Activated CD4-positive, alpha-beta T cell treated with anti-CD3 and anti-CD28 coated beads, Interleukin-2, amount 10 ng/mL, durations not matched to agents 7 days and 5 days (primary cell): ENCODE measurements at regions of chr16 and their contacts with region 1.

Region 1: DNA sequence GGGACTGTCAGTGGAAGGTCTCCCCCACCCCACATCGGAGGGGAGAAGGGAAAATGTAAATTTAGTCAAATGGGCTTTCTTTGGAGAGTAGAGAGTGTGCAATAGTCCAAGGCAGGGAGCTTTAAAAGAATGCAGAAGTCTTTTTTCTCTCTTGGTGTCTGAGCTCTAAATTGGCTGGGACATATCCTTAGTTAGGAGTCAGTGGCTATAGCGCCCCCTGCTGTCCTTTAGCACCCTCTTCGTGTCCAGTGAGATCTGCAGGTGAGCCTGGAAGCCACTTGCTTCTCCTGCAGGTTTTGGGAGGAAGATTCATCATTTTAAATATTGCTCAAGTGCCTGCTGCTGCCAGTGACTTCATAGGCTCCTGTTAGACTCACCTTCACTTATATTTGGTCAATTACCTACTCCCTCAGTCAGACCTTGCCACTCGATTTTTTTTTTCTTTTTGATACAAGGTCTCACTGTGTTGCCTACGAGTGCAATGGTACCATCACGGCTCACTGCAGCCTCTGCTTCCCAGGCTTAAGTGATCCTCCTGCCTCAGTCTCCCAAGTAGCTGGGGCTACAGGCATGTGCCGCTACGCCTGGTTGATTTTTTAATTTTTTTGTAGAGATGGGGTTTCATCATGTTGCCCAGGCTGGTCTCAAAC is 174.8 kb downstream of the PRKCB start:
- DNase-seq: peak; percentile 88
- H3K4me3 Mint-ChIP-seq: no peak overlapping the region
- H3K27ac Mint-ChIP-seq: no peak overlapping the region
- H3K4me1 Mint-ChIP-seq: peaks cover 60% of the 10 kb centered on the region
- H3K27me3 Mint-ChIP-seq: no peaks in the 10 kb centered on the region

Region 2: DNA sequence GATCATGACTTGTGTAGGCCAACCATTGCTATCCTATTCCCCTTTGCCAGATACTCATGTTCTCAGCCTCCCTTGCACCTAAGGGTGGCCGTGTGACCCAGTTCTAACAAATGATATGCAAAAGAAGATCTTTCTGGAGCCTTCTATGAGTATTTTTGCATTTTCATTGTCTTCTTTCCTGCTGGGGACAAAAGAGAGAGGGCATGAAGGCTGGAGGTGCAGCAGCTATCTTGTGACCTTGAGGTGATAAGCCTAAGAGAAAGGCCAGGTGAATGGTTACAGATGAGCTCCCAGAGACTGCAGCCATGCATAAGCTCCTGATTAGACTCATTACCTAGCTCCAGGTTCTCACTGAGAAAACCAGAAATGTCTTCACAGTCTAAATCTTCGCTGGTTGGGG is 213.6 kb before region 1 on chr16:
- CTCF ChIA-PET with region 1: interaction called, 12 read pairs
- POLR2A ChIA-PET with region 1: no interaction called
- DNase-seq: no peak
- H3K4me3 Mint-ChIP-seq: no peak overlapping the region
- H3K27ac Mint-ChIP-seq: no peak overlapping the region
- H3K4me1 Mint-ChIP-seq: no peaks in the 10 kb centered on the region
- H3K27me3 Mint-ChIP-seq: peaks cover 3% of the 10 kb centered on the region

Region 3: DNA sequence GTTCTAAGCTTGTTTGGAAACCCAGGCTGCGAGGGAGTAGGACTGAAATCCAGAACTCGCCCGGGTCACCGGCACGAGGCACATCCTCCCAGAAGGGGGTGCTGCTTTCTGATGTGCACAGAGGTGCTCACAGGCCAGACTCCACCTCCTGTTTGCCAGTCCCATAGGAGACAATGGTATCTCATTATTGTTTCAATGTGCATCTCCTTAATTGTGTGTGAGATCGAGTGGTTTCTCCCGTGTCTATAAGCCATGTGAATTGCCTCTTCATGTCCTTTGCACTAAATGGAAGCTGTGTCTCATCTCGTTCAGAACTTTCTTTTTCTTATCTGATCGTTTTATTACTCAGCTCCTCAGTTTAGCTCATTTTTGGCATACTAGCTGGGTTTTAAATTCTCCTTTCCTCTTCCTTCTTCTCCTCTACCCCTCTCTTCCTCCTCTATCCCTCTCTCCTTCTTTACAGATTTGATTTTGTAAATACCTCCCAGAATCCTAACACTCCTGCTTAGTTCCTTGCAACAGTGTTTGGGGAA is 206.9 kb before region 1 on chr16:
- CTCF ChIA-PET with region 1: interaction called, 12 read pairs
- POLR2A ChIA-PET with region 1: no interaction called
- DNase-seq: peak; percentile 80
- H3K4me3 Mint-ChIP-seq: no peak overlapping the region
- H3K27ac Mint-ChIP-seq: no peak overlapping the region
- H3K4me1 Mint-ChIP-seq: peaks cover 12% of the 10 kb centered on the region
- H3K27me3 Mint-ChIP-seq: peaks cover 7% of the 10 kb centered on the region

Region 4: GRCh38 chr16:23966597-23967394 is 43.8 kb before region 1 on chr16:
- CTCF ChIA-PET with region 1: no interaction called
- POLR2A ChIA-PET with region 1: no interaction called
- DNase-seq: no peak
- H3K4me3 Mint-ChIP-seq: no peak overlapping the region
- H3K27ac Mint-ChIP-seq: no peak overlapping the region
- H3K4me1 Mint-ChIP-seq: peaks cover 27% of the 10 kb centered on the region
- H3K27me3 Mint-ChIP-seq: no peaks in the 10 kb centered on the region

Region 5: DNA sequence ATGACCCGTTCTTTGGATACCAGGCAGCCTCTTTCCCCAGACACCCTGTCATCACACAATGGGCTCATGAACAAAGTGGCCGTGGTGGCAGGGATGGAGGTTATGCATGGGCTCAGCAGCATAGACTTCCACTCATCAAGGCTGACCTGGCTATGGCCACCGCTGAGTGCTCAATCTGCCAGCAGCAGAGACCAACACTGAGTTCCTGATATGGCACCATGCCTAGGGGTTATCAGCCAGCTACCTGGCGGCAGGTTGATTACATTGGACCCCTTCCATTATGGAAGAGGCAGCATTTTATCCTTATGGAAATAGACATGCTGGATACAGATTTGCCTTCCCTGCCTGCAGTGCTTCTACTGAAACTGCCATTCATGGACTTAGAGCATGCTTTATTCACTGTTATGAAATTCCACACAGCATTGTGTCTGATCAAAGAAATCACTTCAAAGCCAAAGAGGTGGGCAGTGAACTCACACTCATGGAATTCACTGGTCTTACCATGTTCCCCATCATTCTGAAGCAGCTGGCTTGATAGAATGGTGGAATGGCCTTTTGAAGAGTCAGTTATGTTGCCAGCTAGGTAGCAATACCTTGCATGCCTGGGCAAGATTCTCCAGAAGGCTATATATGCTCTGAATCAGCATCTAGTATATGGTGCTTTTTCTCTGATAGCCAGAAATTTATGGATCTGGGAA is 14.2 kb before region 1 on chr16:
- CTCF ChIA-PET with region 1: no interaction called
- POLR2A ChIA-PET with region 1: no interaction called
- DNase-seq: no peak
- H3K4me3 Mint-ChIP-seq: no peak overlapping the region
- H3K27ac Mint-ChIP-seq: no peak overlapping the region
- H3K4me1 Mint-ChIP-seq: peaks cover 5% of the 10 kb centered on the region
- H3K27me3 Mint-ChIP-seq: no peaks in the 10 kb centered on the region

Region 6: GRCh38 chr16:24163935-24164334 is 153.4 kb after region 1 on chr16:
- CTCF ChIA-PET with region 1: no interaction called
- POLR2A ChIA-PET with region 1: no interaction called
- DNase-seq: no peak
- H3K4me3 Mint-ChIP-seq: no peak overlapping the region
- H3K27ac Mint-ChIP-seq: no peak overlapping the region
- H3K4me1 Mint-ChIP-seq: peaks cover 1% of the 10 kb centered on the region
- H3K27me3 Mint-ChIP-seq: no peaks in the 10 kb centered on the region